Activated naive CD4-positive, alpha-beta T cell treated with anti-CD3 and anti-CD28 coated beads for 36 hours (primary cell): ENCODE measurements at regions of chr4 and their contacts with region 1.

Region 1: DNA sequence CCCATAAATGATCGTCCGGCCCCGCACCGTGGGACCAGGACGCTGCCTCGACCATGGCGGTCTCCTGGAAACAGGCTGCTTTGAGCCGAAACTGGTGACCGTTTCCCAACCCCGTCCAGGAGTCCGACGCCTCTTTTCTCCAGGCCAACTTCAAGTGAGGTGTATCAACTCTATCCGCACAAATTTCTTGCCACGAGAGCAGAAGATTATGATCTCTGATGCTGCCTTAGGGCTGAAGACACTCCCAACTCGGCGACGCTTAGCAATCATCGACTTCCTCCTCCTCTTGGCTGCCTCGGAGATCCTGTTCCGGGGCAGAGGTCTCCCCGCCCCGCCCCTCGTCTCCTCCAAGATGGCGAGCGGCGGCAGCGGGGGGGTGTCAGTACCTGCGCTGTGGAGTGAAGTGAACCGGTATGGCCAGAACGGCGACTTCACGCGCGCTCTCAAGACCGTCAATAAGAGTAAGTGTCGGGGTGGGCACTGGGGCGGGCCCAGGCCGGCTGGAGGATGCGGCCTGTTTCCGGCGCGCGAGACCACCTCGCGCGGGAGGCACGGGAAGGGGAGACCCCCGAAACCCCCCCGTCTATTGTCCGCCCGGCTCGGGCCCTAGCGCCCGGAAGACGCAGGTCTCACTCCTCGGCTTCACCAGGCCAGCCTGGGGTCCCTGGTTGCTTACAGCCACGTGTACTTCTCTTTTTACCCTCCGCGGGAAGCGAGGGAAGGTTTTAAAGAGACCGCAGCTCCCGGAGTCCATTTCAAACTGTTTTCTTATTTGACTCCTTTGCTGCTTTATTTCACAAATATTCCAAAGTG is at the start of gene SRP72:
- DNase-seq: peak; percentile 91
- H3K4me3 Mint-ChIP-seq: peak within 1 kb of the TSS; percentile 100
- H3K27ac Mint-ChIP-seq: peak within 1 kb of the TSS; percentile 97
- H3K4me1 Mint-ChIP-seq: peaks cover 33% of the 10 kb centered on the region
- H3K27me3 Mint-ChIP-seq: no peaks in the 10 kb centered on the region
- total RNA-seq, gene SRP72: 200 to 212 TPM

Region 2: GRCh38 chr4:56387023-56388001 is 80.2 kb before region 1 on chr4 and contains the start of gene AASDH:
- CTCF ChIA-PET with region 1: interaction called, 3 read pairs
- intact Hi-C with region 1: loop called (anchors 1 kb)
- DNase-seq: peak; percentile 97
- H3K4me3 Mint-ChIP-seq: peak within 1 kb of the TSS; percentile 87
- H3K27ac Mint-ChIP-seq: peak within 1 kb of the TSS; percentile 95
- H3K4me1 Mint-ChIP-seq: peaks cover 39% of the 10 kb centered on the region
- H3K27me3 Mint-ChIP-seq: no peaks in the 10 kb centered on the region
- total RNA-seq, gene AASDH: 13.5 to 17.0 TPM

Region 3: DNA sequence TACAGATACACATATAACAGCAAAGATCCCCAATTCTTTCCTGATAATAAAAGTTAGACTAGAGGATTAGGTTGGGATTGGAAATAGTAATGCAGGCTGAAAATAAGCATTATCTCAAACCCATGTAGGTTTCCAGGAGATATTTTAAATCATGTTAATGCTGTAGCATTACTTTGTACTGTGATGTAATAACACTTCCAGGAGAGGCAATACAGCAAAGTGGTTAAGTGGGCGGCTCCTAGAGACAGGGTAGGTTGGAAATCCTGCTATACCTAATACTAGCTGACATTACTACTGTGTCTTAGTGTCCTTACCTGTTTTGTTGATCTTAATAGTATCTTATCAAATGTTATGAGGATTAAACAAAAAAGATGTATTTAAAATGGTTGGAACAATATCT is 21.8 kb before region 1 on chr4:
- CTCF ChIA-PET with region 1: no interaction called
- intact Hi-C with region 1: no loop called
- DNase-seq: no peak
- H3K4me3 Mint-ChIP-seq: no peak overlapping the region
- H3K27ac Mint-ChIP-seq: no peak overlapping the region
- H3K4me1 Mint-ChIP-seq: peaks cover 42% of the 10 kb centered on the region
- H3K27me3 Mint-ChIP-seq: no peaks in the 10 kb centered on the region

Region 4: GRCh38 chr4:56505269-56506130 is 38.0 kb after region 1 on chr4 and contains the start of gene ARL9:
- CTCF ChIA-PET with region 1: interaction called, 3 read pairs
- intact Hi-C with region 1: loop called (anchors 2 kb)
- DNase-seq: peak; percentile 65
- H3K4me3 Mint-ChIP-seq: peak within 1 kb of the TSS; percentile 86
- H3K27ac Mint-ChIP-seq: no peak within 1 kb of the TSS
- H3K4me1 Mint-ChIP-seq: peaks cover 19% of the 10 kb centered on the region
- H3K27me3 Mint-ChIP-seq: peaks cover 8% of the 10 kb centered on the region
- total RNA-seq, gene ARL9: 0.21 to 0.27 TPM